K562 (cell line): ENCODE measurements at regions of chr5 and their contacts with region 1.

Region 1: GRCh38 chr5:62779010-62779422 is 200.4 kb downstream of the LRRC70 start:
- DNase-seq: peak; percentile 45 to 61 (median 50)
- ATAC-seq: peak; percentile 87
- H3K4me3 ChIP-seq: no peak overlapping the region
- H3K27ac ChIP-seq: no peak overlapping the region
- H3K4me1 ChIP-seq: peaks cover 0 to 3% of the 10 kb centered on the region in 2 experiments; a peak in 1 of 5 replicates
- H3K27me3 ChIP-seq: 0 out of 5 replicates have a peak, but pooled peaks cover 2 to 4% of the 10 kb centered on the region in 2 experiments
- CTCF ChIP-seq: peak; percentile 42 to 78 (median 77)
- EP300 ChIP-seq: no peak
- POLR2A ChIP-seq: no peak
- RAD21 ChIP-seq: peak; percentile 61 to 76

Region 2: GRCh38 chr5:62199792-62200716 is 579.0 kb before region 1 on chr5:
- CTCF ChIA-PET with region 1: no interaction called
- POLR2A ChIA-PET with region 1: no interaction called
- in situ Hi-C with region 1: loop called (anchors 25 kb)
- intact Hi-C with region 1: no loop called
- DNase-seq: no peak
- ATAC-seq: no peak
- H3K4me3 ChIP-seq: no peak overlapping the region
- H3K27ac ChIP-seq: no peak overlapping the region
- H3K4me1 ChIP-seq: peaks cover 0 to 9% of the 10 kb centered on the region in 2 experiments; a peak in 1 of 5 replicates
- H3K27me3 ChIP-seq: peaks cover 0 to 4% of the 10 kb centered on the region in 2 experiments; a peak in 1 of 5 replicates
- CTCF ChIP-seq: no peak
- EP300 ChIP-seq: no peak
- POLR2A ChIP-seq: no peak
- RAD21 ChIP-seq: no peak

Region 3: DNA sequence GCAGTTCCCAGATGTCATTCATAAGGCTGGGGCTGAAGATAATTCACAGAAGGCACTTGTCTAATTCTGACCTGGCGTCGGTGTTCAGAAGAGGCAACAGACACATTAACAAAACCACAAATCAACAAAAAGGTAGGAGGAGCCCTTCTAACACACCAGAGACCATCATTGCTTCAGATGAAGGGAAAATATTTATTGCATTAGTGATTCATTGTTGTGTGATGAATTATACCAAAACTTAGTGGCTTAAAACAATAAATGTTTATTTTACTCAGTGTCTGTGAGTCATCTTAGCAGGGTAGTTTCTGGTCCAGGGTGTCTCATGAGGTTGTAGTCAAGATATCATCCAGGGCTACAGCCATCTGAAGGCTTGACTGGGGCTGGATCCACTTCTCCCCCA is 564.3 kb before region 1 on chr5:
- CTCF ChIA-PET with region 1: no interaction called
- POLR2A ChIA-PET with region 1: no interaction called
- in situ Hi-C with region 1: no loop called
- intact Hi-C with region 1: loop called (anchors 10 kb)
- DNase-seq: no peak
- ATAC-seq: no peak
- H3K4me3 ChIP-seq: no peak overlapping the region
- H3K27ac ChIP-seq: no peak overlapping the region
- H3K4me1 ChIP-seq: no peaks in the 10 kb centered on the region
- H3K27me3 ChIP-seq: peaks cover 14 to 17% of the 10 kb centered on the region in 2 experiments; a peak in 4 of 5 replicates
- CTCF ChIP-seq: no peak
- EP300 ChIP-seq: no peak
- POLR2A ChIP-seq: no peak
- RAD21 ChIP-seq: no peak

Region 4: DNA sequence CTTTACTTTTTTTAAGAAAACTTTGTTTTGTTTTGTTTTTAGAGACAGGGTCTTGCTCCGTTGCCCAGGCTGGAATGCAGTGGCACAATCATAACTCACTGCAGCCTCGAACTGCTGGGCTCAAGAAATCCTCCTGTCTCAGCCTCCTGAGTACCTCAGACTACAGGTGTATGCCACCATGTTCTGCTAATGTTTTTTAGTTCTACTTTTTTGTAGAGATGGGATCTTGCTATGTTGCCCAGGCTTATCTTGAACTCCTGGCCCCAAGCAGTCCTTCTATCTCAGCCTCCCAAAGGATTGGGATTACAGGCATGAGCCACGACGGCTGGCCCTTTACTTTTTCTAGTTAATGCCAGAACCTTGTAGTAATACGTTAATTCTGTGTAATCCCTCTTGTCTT is 330.5 kb before region 1 on chr5:
- CTCF ChIA-PET with region 1: interaction called, 9 read pairs
- POLR2A ChIA-PET with region 1: no interaction called
- in situ Hi-C with region 1: loop called (anchors 10 kb)
- intact Hi-C with region 1: loop called (anchors 5 kb)
- DNase-seq: no peak
- ATAC-seq: no peak
- H3K4me3 ChIP-seq: no peak overlapping the region
- H3K27ac ChIP-seq: no peak overlapping the region
- H3K4me1 ChIP-seq: peaks cover 2 to 3% of the 10 kb centered on the region in 2 experiments; a peak in 1 of 5 replicates
- H3K27me3 ChIP-seq: no peaks in the 10 kb centered on the region
- CTCF ChIP-seq: no peak
- EP300 ChIP-seq: no peak
- POLR2A ChIP-seq: no peak
- RAD21 ChIP-seq: no peak

Region 5: GRCh38 chr5:62460578-62460983 is 318.4 kb before region 1 on chr5:
- CTCF ChIA-PET with region 1: interaction called, 7 read pairs
- POLR2A ChIA-PET with region 1: no interaction called
- in situ Hi-C with region 1: loop called (anchors 10 kb)
- intact Hi-C with region 1: loop called (anchors 1 kb)
- DNase-seq: peak; percentile 24 to 46 (median 30)
- ATAC-seq: peak; percentile 85
- H3K4me3 ChIP-seq: no peak overlapping the region
- H3K27ac ChIP-seq: no peak overlapping the region
- H3K4me1 ChIP-seq: no peaks in the 10 kb centered on the region
- H3K27me3 ChIP-seq: no peaks in the 10 kb centered on the region
- CTCF ChIP-seq: peak; percentile 37 to 82 (median 64); a peak in 5 of 6 replicates
- EP300 ChIP-seq: no peak
- POLR2A ChIP-seq: no peak
- RAD21 ChIP-seq: peak; percentile 57 to 83